ENCODE measurements at regions of chr17 and their contacts with region 1.

Region 1: GRCh38 chr17:7435221-7435675 is at the start of gene TMEM102:
- DNase-seq: peak; percentile 99
- H3K4me3 Mint-ChIP-seq: peak within 1 kb of the TSS; percentile 92
- H3K27ac Mint-ChIP-seq: peak within 1 kb of the TSS; percentile 91
- H3K4me1 Mint-ChIP-seq: peaks cover 36% of the 10 kb centered on the region
- H3K27me3 Mint-ChIP-seq: peaks cover 12% of the 10 kb centered on the region
- total RNA-seq, gene TMEM102: 3.3 to 3.5 TPM

Region 2: GRCh38 chr17:7280519-7281429 is 154.5 kb before region 1 on chr17:
- CTCF ChIA-PET with region 1: interaction called, 3 read pairs
- intact Hi-C with region 1: loop called (anchors 1 kb)
- DNase-seq: peak; percentile 91
- H3K4me3 Mint-ChIP-seq: peak overlapping the region; percentile 74
- H3K27ac Mint-ChIP-seq: no peak overlapping the region
- H3K4me1 Mint-ChIP-seq: peaks cover 20% of the 10 kb centered on the region
- H3K27me3 Mint-ChIP-seq: peaks cover 17% of the 10 kb centered on the region

Region 3: GRCh38 chr17:7403977-7404736 is 31.1 kb before region 1 on chr17 and contains the start of gene TMEM256:
- CTCF ChIA-PET with region 1: interaction called, 8 read pairs
- intact Hi-C with region 1: loop called (anchors 1 kb)
- DNase-seq: peak; percentile 99
- H3K4me3 Mint-ChIP-seq: peak within 1 kb of the TSS; percentile 93
- H3K27ac Mint-ChIP-seq: peak within 1 kb of the TSS; percentile 93
- H3K4me1 Mint-ChIP-seq: peaks cover 19% of the 10 kb centered on the region
- H3K27me3 Mint-ChIP-seq: peaks cover 2% of the 10 kb centered on the region
- total RNA-seq, gene TMEM256: 65.6 to 66.3 TPM

Region 4: GRCh38 chr17:7515911-7516610 is 80.8 kb after region 1 on chr17:
- CTCF ChIA-PET with region 1: interaction called, 10 read pairs
- intact Hi-C with region 1: no loop called
- DNase-seq: no peak
- H3K4me3 Mint-ChIP-seq: no peak overlapping the region
- H3K27ac Mint-ChIP-seq: no peak overlapping the region
- H3K4me1 Mint-ChIP-seq: peaks cover 2% of the 10 kb centered on the region
- H3K27me3 Mint-ChIP-seq: no peaks in the 10 kb centered on the region

Region 5: DNA sequence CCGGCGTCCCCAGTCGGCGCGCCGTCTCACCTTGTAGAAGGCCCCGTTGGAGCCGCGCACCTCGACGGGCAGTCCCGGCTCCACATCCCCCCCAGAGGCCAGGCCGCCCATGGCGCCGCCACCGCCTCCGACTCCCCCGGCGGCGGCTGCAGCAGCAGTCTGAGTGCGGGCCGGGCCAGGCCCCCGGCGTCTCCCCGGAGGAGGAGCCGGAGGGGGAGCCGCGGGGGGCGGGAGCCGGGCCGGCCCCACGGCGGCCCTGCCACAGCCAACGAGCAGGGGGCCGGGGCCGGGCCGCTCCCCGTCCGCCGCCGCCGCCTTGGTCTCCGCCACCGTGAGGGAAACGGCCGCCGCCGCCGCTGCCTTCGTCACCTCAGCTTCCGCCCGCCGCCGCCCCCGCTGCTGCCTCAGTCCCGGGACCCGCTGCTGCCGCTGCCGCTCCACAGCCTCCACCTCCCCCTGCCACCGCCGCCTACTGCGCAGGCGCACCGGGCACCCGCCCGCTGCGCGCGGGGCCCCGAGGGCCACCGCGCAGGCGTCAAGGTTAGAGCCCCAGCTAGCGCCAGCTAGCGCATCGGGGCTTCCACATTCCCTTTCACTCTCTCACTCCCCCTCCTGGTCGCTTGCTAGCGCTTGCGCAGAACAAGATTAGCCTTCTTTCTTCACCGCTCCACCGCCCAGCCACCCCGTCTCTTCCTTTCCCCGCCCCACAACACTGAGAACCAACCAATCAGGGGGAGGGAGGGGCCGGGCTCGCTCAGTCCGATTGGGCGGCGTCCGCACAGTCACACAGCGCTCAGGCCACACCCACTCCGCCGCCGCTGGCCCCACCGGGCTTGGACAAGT is 179.4 kb after region 1 on chr17 and contains the start of gene FXR2:
- CTCF ChIA-PET with region 1: no interaction called
- intact Hi-C with region 1: loop called (anchors 2 kb)
- DNase-seq: peak; percentile 100
- H3K4me3 Mint-ChIP-seq: peak within 1 kb of the TSS; percentile 83
- H3K27ac Mint-ChIP-seq: peak within 1 kb of the TSS; percentile 84
- H3K4me1 Mint-ChIP-seq: peaks cover 32% of the 10 kb centered on the region
- H3K27me3 Mint-ChIP-seq: no peaks in the 10 kb centered on the region
- total RNA-seq, gene FXR2: 29.7 to 36.8 TPM